PC-9 (cell line): ENCODE measurements at regions of chr1 and their contacts with region 1.

Region 1: GRCh38 chr1:214823311-214824117 is 220.5 kb downstream of the CENPF start:
- DNase-seq: no peak
- H3K4me3 ChIP-seq: no peak overlapping the region
- H3K27ac ChIP-seq: no peak overlapping the region
- H3K4me1 ChIP-seq: no peaks in the 10 kb centered on the region
- H3K27me3 ChIP-seq: no peaks in the 10 kb centered on the region
- CTCF ChIP-seq: no peak

Region 2: GRCh38 chr1:214857716-214858115 is 34.2 kb after region 1 on chr1:
- CTCF ChIA-PET with region 1: no interaction called
- POLR2A ChIA-PET with region 1: no interaction called
- intact Hi-C with region 1: loop called (anchors 1 kb)
- DNase-seq: no peak
- H3K4me3 ChIP-seq: no peak overlapping the region
- H3K27ac ChIP-seq: no peak overlapping the region
- H3K4me1 ChIP-seq: no peaks in the 10 kb centered on the region
- H3K27me3 ChIP-seq: no peaks in the 10 kb centered on the region
- CTCF ChIP-seq: no peak

Region 3: GRCh38 chr1:214957330-214958137 is 134.0 kb after region 1 on chr1:
- CTCF ChIA-PET with region 1: no interaction called
- POLR2A ChIA-PET with region 1: no interaction called
- intact Hi-C with region 1: no loop called
- DNase-seq: peak; percentile 24 to 44
- H3K4me3 ChIP-seq: no peak overlapping the region
- H3K27ac ChIP-seq: no peak overlapping the region
- H3K4me1 ChIP-seq: no peaks in the 10 kb centered on the region; the same call in 1 of the 2 replicates
- H3K27me3 ChIP-seq: no peaks in the 10 kb centered on the region
- CTCF ChIP-seq: no peak